CD8-positive, alpha-beta memory T cell (primary cell): ENCODE measurements at regions of chr3 and their contacts with region 1.

Region 1: GRCh38 chr3:32296256-32297204 is 58.0 kb downstream of the CMTM8 start:
- DNase-seq: peak; percentile 31 to 67 (median 50)
- H3K4me3 ChIP-seq: peak overlapping the region; percentile 11
- H3K4me3 Mint-ChIP-seq: peak overlapping the region in 5 of 7 donors; percentile 27 to 69 (median 41)
- H3K27ac ChIP-seq: no peak overlapping the region
- H3K27ac Mint-ChIP-seq: peak overlapping the region in 7 of 8 donors; percentile 54 to 95 (median 76)
- H3K4me1 ChIP-seq: peaks cover 17% of the 10 kb centered on the region
- H3K4me1 Mint-ChIP-seq: peaks cover 12 to 24% (median 16%) of the 10 kb centered on the region in 3 donors
- H3K27me3 ChIP-seq: no peaks in the 10 kb centered on the region
- H3K27me3 Mint-ChIP-seq: peaks cover 0 to 2% of the 10 kb centered on the region in 2 donors

Region 2: GRCh38 chr3:32238453-32239306 is 57.9 kb before region 1 on chr3 and contains the start of gene CMTM8:
- CTCF ChIA-PET with region 1: interaction called, 11 read pairs
- POLR2A ChIA-PET with region 1: no interaction called
- DNase-seq: peak; percentile 34 to 68 (median 55)
- H3K4me3 ChIP-seq: peak within 1 kb of the TSS; percentile 76
- H3K4me3 Mint-ChIP-seq: peak within 1 kb of the TSS; percentile 82 to 93 (median 87)
- H3K27ac ChIP-seq: no peak within 1 kb of the TSS
- H3K27ac Mint-ChIP-seq: peak within 1 kb of the TSS in 4 of 8 donors; percentile 21 to 79 (median 42)
- H3K4me1 ChIP-seq: peaks cover 15% of the 10 kb centered on the region
- H3K4me1 Mint-ChIP-seq: peaks cover 14 to 28% (median 17%) of the 10 kb centered on the region in 3 donors
- H3K27me3 ChIP-seq: no peaks in the 10 kb centered on the region
- H3K27me3 Mint-ChIP-seq: peaks cover 7 to 9% of the 10 kb centered on the region in 2 donors
- total RNA-seq, gene CMTM8: 3.3 to 4.1 TPM

Region 3: DNA sequence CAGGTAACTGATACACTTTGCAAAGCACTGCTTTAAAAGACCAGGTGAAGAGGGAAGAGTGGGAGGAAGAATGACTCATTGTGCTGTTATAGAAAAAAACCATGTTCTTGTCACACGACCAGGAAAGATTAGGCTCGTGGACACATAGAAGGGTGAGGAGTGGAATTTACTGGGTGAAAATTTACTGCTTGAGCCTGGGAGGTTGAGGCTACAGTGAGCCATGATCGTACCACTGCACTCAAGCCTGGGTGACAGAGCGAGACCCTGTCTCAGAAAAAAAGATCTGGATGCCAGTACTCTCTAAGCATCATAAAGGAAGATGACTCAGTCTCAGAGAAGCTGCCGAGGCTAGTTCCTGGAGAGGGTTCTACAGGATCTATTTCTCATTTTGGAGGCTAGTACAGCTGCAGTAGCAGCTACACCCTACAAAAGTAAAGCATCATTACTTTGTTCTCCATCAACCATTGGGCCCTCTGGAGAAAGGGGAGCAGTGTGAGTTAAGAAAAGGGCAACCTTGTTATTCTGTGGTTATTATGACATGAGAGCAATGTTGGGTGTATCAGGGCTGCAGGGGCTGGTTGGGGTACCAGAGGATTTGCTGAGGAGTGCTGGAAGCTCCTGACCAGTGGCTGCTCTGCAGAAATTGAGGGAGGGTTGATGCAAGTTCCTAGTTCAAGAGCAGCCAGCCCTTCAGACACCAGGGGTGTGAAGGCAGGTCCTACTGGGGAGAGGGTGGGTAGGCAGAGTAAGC is 17.4 kb after region 1 on chr3:
- CTCF ChIA-PET with region 1: interaction called, 15 read pairs
- POLR2A ChIA-PET with region 1: no interaction called
- DNase-seq: no peak
- H3K4me3 ChIP-seq: no peak overlapping the region
- H3K4me3 Mint-ChIP-seq: peak overlapping the region in 4 of 7 donors; percentile 27 to 70 (median 48)
- H3K27ac ChIP-seq: no peak overlapping the region
- H3K27ac Mint-ChIP-seq: peak overlapping the region; percentile 29 to 87 (median 71)
- H3K4me1 ChIP-seq: peaks cover 11% of the 10 kb centered on the region
- H3K4me1 Mint-ChIP-seq: peaks cover 10 to 18% (median 13%) of the 10 kb centered on the region in 3 donors
- H3K27me3 ChIP-seq: no peaks in the 10 kb centered on the region
- H3K27me3 Mint-ChIP-seq: no peaks in the 10 kb centered on the region

Region 4: DNA sequence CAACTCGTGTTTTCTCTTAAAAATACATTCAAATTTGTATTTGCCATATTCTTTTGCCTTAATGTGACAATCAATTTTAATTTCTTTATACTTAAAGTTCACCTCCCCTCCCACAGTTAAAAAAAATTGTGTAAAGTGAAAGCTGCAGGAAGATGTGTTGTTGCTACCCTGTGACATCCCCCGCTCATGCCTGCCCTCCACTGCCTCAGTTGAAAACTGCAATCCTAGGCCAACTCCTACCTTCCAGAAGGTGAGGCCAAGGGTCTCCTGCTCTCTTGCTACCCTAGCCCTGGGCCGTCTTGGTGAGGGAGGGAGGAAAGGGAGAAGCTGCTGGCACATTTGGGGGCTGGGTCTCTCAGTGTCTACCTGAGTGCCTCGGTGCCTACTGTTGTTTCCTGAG is 38.1 kb after region 1 on chr3:
- CTCF ChIA-PET with region 1: interaction called, 12 read pairs
- POLR2A ChIA-PET with region 1: no interaction called
- DNase-seq: peak in 2 of 5 donors; percentile 30 to 54
- H3K4me3 ChIP-seq: no peak overlapping the region
- H3K4me3 Mint-ChIP-seq: peak overlapping the region in 1 of 7 donors; percentile 71
- H3K27ac ChIP-seq: no peak overlapping the region
- H3K27ac Mint-ChIP-seq: peak overlapping the region in 1 of 8 donors; percentile 66
- H3K4me1 ChIP-seq: peaks cover 16% of the 10 kb centered on the region
- H3K4me1 Mint-ChIP-seq: peaks cover 3 to 27% (median 23%) of the 10 kb centered on the region in 3 donors
- H3K27me3 ChIP-seq: no peaks in the 10 kb centered on the region
- H3K27me3 Mint-ChIP-seq: no peaks in the 10 kb centered on the region

Region 5: DNA sequence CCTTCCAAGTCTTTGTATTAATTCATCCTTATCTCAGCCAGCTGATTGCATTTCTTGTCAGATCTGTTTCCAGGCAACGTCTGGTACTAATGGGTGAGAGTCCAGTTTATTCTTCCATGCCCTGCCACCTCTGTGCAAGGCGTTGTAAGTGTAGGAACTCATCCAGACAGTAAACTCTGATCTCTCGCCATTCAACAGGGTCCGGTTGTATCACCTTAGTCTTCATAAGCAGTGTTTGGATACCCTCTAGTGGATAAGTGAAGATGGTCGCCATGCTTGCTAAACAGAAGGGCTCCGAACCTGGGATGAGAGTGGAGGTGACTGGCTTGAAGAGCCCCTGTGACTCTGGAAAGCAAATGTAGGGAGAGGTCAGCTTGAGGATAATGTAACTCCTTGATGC is 43.5 kb after region 1 on chr3:
- CTCF ChIA-PET with region 1: interaction called, 12 read pairs
- POLR2A ChIA-PET with region 1: no interaction called
- DNase-seq: peak in 3 of 5 donors; percentile 15 to 51 (median 50)
- H3K4me3 ChIP-seq: no peak overlapping the region
- H3K4me3 Mint-ChIP-seq: no peak overlapping the region
- H3K27ac ChIP-seq: no peak overlapping the region
- H3K27ac Mint-ChIP-seq: no peak overlapping the region
- H3K4me1 ChIP-seq: peaks cover 13% of the 10 kb centered on the region
- H3K4me1 Mint-ChIP-seq: peaks cover 0 to 16% (median 14%) of the 10 kb centered on the region in 3 donors
- H3K27me3 ChIP-seq: no peaks in the 10 kb centered on the region
- H3K27me3 Mint-ChIP-seq: no peaks in the 10 kb centered on the region

Region 6: DNA sequence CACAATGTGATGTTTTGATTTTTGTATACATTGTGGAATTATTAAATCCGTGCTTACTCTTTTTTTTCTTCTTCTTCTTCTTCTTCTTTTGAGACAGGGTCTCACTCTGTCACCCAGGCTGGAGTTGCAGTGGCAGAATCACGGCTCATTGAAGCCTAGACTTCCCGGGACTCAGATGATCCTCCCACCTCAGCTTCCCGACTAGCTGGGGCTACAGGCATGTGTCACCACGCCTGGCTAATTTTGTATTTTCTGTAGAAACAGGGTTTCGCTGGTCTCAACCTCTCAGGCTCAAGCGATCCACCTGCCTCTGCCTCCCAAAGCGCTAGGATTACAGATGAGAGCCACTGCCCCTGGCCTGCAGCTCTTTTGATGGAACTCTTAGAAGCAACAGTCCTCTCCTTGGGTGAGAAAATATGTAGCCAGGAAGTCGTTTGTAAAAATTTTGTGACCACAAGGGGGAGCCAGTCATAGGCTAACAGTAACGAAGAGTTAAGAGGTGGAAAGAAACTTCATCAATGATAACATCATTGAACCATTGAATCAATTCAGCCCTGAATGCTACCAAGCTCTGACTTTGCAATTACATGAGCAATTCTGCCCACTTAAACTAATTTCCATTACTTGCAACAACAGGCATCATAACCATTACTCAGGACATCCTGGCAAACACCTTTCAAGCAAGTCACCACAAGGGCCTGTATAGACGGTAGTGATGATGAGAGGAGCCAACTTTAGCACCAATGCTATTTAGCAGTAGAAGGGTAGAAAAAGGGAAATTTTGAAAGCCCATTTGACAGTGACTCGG is 78.5 kb after region 1 on chr3:
- CTCF ChIA-PET with region 1: interaction called, 12 read pairs
- POLR2A ChIA-PET with region 1: no interaction called
- DNase-seq: peak; percentile 37 to 77 (median 68)
- H3K4me3 ChIP-seq: no peak overlapping the region
- H3K4me3 Mint-ChIP-seq: no peak overlapping the region
- H3K27ac ChIP-seq: no peak overlapping the region
- H3K27ac Mint-ChIP-seq: peak overlapping the region in 2 of 8 donors; percentile 10 to 90
- H3K4me1 ChIP-seq: peaks cover 23% of the 10 kb centered on the region
- H3K4me1 Mint-ChIP-seq: peaks cover 11 to 23% (median 16%) of the 10 kb centered on the region in 3 donors
- H3K27me3 ChIP-seq: no peaks in the 10 kb centered on the region
- H3K27me3 Mint-ChIP-seq: no peaks in the 10 kb centered on the region

Region 7: GRCh38 chr3:32460031-32460749 is 163.7 kb after region 1 on chr3:
- CTCF ChIA-PET with region 1: no interaction called
- POLR2A ChIA-PET with region 1: no interaction called
- DNase-seq: peak; percentile 59 to 96 (median 92)
- H3K4me3 ChIP-seq: peak overlapping the region; percentile 53
- H3K4me3 Mint-ChIP-seq: peak overlapping the region in 4 of 7 donors; percentile 81 to 88 (median 88)
- H3K27ac ChIP-seq: peak overlapping the region; percentile 88
- H3K27ac Mint-ChIP-seq: no peak overlapping the region
- H3K4me1 ChIP-seq: peaks cover 83% of the 10 kb centered on the region
- H3K4me1 Mint-ChIP-seq: peaks cover 31 to 37% (median 33%) of the 10 kb centered on the region in 3 donors
- H3K27me3 ChIP-seq: no peaks in the 10 kb centered on the region
- H3K27me3 Mint-ChIP-seq: no peaks in the 10 kb centered on the region